ENCODE measurements at regions of chr20 and their contacts with region 1.

Region 1: DNA sequence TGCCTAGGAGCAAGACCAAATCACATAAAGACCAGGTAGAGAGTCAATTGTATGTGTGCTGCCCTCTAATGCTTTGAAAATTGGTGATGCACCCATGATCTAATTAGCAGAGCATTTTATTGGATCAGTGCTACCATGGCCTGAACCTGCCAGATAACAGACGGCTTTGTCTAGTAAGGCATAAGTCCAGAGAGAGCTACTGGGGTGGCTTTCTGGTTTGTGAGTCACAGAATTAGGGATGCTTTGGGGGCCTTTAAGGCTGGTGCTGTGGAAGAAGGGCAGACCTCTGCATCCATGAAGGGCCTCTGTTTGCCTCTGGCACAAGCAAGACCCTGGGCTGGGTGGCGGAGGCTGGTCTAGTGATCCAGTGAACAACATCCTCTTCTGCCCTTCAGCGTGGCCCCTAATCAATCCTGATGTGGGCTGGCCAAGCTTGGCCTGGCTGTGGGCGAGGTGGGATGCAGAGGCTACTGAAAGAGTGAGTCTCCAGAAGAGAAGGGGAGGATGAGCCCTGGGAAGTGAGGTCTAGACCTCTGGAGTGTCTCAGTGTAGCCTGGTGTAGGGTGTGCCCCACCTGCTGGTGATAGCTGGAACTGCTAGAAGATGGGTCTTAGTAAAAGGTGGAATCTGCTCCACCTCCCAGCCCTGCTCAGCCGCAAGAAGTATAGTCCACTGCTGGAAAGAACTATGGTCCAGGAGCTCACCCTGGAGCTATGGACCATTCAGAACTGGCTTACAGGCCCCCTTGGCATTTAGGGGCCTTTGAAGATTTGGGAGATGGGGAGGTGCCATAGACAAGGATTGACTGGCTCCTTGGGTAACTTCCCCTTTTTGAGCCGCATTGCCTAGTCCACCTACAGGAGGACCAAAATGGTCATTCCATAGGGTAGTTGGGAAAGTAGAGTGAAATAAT is 36.7 kb upstream of the AAR2 start:
- DNase-seq: peak; percentile 77
- H3K4me3 ChIP-seq: no peak overlapping the region
- H3K27ac ChIP-seq: no peak overlapping the region
- H3K4me1 ChIP-seq: no peaks in the 10 kb centered on the region
- CTCF ChIP-seq: peak; percentile 91

Region 2: GRCh38 chr20:36145877-36146707 is 53.5 kb before region 1 on chr20:
- CTCF ChIA-PET with region 1: interaction called, 3 read pairs
- POLR2A ChIA-PET with region 1: interaction called, 3 read pairs
- intact Hi-C with region 1: loop called (anchors 1 kb)
- DNase-seq: peak; percentile 45
- H3K4me3 ChIP-seq: no peak overlapping the region
- H3K27ac ChIP-seq: peak overlapping the region; percentile 30
- H3K4me1 ChIP-seq: peaks cover 66% of the 10 kb centered on the region
- CTCF ChIP-seq: no peak

Region 3: DNA sequence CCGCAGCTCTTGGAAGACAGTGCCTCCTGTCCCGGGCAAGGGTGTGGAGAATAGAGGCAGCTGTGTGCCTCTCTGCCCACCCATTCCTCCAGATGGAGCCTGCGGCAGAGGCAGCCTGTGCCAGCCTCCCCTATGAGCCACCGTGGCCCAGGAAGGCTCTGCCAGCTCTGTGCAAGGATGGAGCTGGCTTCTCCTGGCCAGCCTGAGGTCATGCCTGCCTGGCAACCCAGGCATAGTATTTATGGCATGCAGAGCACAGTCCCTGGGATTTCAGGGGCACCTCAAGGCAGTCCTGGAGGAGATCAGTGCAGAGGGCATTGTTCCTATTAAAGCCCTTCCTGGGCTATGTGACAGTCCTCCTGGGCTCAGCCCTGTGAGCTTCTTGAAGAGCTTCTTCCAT is 43.6 kb before region 1 on chr20:
- CTCF ChIA-PET with region 1: no interaction called
- POLR2A ChIA-PET with region 1: interaction called, 3 read pairs
- intact Hi-C with region 1: loop called (anchors 1 kb)
- DNase-seq: no peak
- H3K4me3 ChIP-seq: no peak overlapping the region
- H3K27ac ChIP-seq: no peak overlapping the region
- H3K4me1 ChIP-seq: peaks cover 6% of the 10 kb centered on the region
- CTCF ChIP-seq: no peak

Region 4: GRCh38 chr20:36439040-36439730 is 239.6 kb after region 1 on chr20:
- CTCF ChIA-PET with region 1: interaction called, 3 read pairs
- POLR2A ChIA-PET with region 1: no interaction called
- intact Hi-C with region 1: loop called (anchors 2 kb)
- DNase-seq: peak; percentile 69
- H3K4me3 ChIP-seq: no peak overlapping the region
- H3K27ac ChIP-seq: no peak overlapping the region
- H3K4me1 ChIP-seq: peaks cover 3% of the 10 kb centered on the region
- CTCF ChIP-seq: peak; percentile 93

Region 5: DNA sequence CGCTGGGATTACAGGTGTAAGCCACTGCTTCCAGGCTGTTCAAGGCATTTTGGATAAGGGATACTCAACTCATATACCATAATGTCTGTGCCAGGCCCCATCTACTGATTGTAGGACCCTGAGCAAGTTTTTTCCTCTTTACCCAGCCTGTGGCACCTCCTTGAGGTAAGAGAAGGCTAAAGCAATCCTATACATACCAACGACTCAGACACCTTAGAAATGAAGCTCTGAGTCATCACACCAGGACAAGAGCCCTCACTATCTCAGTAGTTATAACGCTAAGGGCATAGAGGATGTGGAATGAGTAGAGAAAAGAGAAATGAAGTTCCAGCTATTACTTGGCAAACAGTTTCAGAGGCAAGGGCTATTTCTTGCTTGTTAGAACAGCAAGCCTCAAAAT is 529.4 kb after region 1 on chr20:
- CTCF ChIA-PET with region 1: interaction called, 10 read pairs
- POLR2A ChIA-PET with region 1: no interaction called
- intact Hi-C with region 1: no loop called
- DNase-seq: peak; percentile 25
- H3K4me3 ChIP-seq: no peak overlapping the region
- H3K27ac ChIP-seq: no peak overlapping the region
- H3K4me1 ChIP-seq: no peaks in the 10 kb centered on the region
- CTCF ChIP-seq: peak; percentile 58

Measured in OCI-LY7 (cell line).